HepG2 (cell line): ENCODE measurements at regions of chr11 and their contacts with region 1.

Region 1: GRCh38 chr11:43579171-43579918 is 101.2 kb upstream of the HSD17B12 start:
- DNase-seq: no peak
- ATAC-seq: peak; percentile 89
- H3K4me3 ChIP-seq: peak overlapping the region; percentile 63 to 73 (median 65)
- H3K27ac ChIP-seq: no peak overlapping the region
- H3K4me1 ChIP-seq: no peaks in the 10 kb centered on the region
- H3K27me3 ChIP-seq: peaks cover 14 to 92% of the 10 kb centered on the region in 2 experiments
- CTCF ChIP-seq: peak; percentile 61
- EP300 ChIP-seq: no peak
- POLR2A ChIP-seq: no peak
- RAD21 ChIP-seq: no peak

Region 2: DNA sequence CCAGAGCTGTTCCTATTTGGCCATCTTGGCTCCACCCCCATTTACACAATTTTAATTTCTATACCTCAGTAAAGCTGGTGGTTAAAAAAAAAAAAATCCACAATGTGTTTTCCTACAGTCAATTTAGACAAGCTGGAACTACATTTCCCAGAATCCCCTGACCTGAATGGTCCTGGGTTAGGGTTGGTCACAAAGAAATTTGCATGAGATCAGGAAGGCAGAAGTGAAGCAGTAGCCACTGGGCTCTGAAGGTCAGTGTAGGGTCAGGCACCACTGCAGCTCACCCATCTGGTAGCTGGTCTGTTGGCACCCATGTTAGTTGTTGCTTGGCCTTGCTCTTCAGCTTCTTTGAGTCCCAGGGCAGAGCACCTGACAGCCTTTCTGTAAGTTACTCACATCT is 478.2 kb before region 1 on chr11:
- CTCF ChIA-PET with region 1: no interaction called
- POLR2A ChIA-PET with region 1: no interaction called
- in situ Hi-C with region 1: no loop called
- intact Hi-C with region 1: no loop called
- DNase-seq: no peak
- ATAC-seq: no peak
- H3K4me3 ChIP-seq: no peak overlapping the region
- H3K27ac ChIP-seq: no peak overlapping the region
- H3K4me1 ChIP-seq: no peaks in the 10 kb centered on the region
- H3K27me3 ChIP-seq: no peaks in the 10 kb centered on the region
- CTCF ChIP-seq: no peak
- EP300 ChIP-seq: no peak
- POLR2A ChIP-seq: no peak
- RAD21 ChIP-seq: no peak

Region 3: GRCh38 chr11:43467958-43468357 is 111.4 kb before region 1 on chr11:
- CTCF ChIA-PET with region 1: no interaction called
- POLR2A ChIA-PET with region 1: no interaction called
- in situ Hi-C with region 1: no loop called
- intact Hi-C with region 1: no loop called
- DNase-seq: no peak
- ATAC-seq: no peak
- H3K4me3 ChIP-seq: no peak overlapping the region
- H3K27ac ChIP-seq: no peak overlapping the region
- H3K4me1 ChIP-seq: no peaks in the 10 kb centered on the region
- H3K27me3 ChIP-seq: no peaks in the 10 kb centered on the region
- CTCF ChIP-seq: no peak
- EP300 ChIP-seq: no peak
- POLR2A ChIP-seq: no peak
- RAD21 ChIP-seq: no peak

Region 4: GRCh38 chr11:43614214-43614613 is 34.9 kb after region 1 on chr11:
- CTCF ChIA-PET with region 1: no interaction called
- POLR2A ChIA-PET with region 1: no interaction called
- in situ Hi-C with region 1: no loop called
- intact Hi-C with region 1: no loop called
- DNase-seq: no peak
- ATAC-seq: no peak
- H3K4me3 ChIP-seq: no peak overlapping the region
- H3K27ac ChIP-seq: no peak overlapping the region
- H3K4me1 ChIP-seq: no peaks in the 10 kb centered on the region
- H3K27me3 ChIP-seq: 0 out of 5 replicates have a peak, but pooled peaks cover 2 to 4% of the 10 kb centered on the region in 2 experiments
- CTCF ChIP-seq: no peak
- EP300 ChIP-seq: no peak
- POLR2A ChIP-seq: no peak
- RAD21 ChIP-seq: no peak

Region 5: DNA sequence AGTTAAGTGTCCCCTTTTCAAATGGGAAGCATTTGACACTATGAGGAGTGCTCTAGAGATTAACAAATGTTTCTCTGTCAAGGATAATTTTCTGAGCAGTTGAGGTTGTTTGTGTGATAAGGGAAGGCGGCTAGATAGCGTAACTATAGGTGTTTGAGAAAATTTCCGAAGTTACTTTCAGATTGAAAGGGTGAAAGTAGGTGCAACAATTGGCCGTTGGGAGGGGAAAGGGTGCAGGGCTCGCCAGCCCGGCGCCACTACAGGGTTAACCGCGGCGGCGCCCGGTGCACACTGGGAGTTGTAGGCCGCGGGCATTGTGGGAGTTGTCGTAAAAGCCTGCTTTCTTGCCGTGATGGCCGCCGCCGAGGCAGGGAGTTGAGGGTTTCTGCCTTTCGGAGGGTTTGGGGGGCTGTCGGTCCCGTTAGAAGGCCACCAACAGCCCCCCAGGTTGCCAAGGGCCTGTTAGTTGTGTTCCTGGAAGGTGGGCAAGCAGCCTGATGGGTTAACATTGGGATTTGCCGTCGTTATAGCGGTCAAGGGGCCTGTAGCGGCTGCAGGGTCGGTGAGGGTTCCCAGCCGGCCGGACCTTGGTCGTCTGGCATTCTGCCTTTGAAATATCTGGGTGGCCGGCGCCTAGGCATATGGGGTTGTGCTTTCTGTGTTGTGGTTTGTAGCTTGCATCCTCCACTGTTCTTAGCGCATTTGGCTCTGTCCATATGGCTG is 64.7 kb after region 1 on chr11:
- CTCF ChIA-PET with region 1: no interaction called
- POLR2A ChIA-PET with region 1: no interaction called
- in situ Hi-C with region 1: loop called (anchors 10 kb)
- intact Hi-C with region 1: no loop called
- DNase-seq: peak; percentile 77
- ATAC-seq: peak; percentile 99
- H3K4me3 ChIP-seq: peak overlapping the region; percentile 77 to 92 (median 91)
- H3K27ac ChIP-seq: peak overlapping the region; percentile 86
- H3K4me1 ChIP-seq: peaks cover 26% of the 10 kb centered on the region
- H3K27me3 ChIP-seq: peaks cover 0 to 8% of the 10 kb centered on the region in 2 experiments; a peak in 1 of 5 replicates
- CTCF ChIP-seq: 0 out of 2 replicates have a peak, but pooled peaks have one; percentile 2
- EP300 ChIP-seq: peak in 1 of 2 experiments; percentile 25; a peak in 1 of 4 replicates
- POLR2A ChIP-seq: peak; percentile 81 to 86
- RAD21 ChIP-seq: 0 out of 2 replicates have a peak, but pooled peaks have one; percentile 25

Region 6: GRCh38 chr11:43680521-43681400 is 101.4 kb after region 1 on chr11 and contains the start of gene HSD17B12:
- CTCF ChIA-PET with region 1: no interaction called
- POLR2A ChIA-PET with region 1: no interaction called
- in situ Hi-C with region 1: no loop called
- intact Hi-C with region 1: loop called (anchors 5 kb)
- DNase-seq: peak; percentile 98
- ATAC-seq: peak; percentile 99
- H3K4me3 ChIP-seq: peak within 1 kb of the TSS; percentile 80 to 95 (median 91)
- H3K27ac ChIP-seq: peak within 1 kb of the TSS; percentile 89
- H3K4me1 ChIP-seq: peaks cover 39% of the 10 kb centered on the region
- H3K27me3 ChIP-seq: no peaks in the 10 kb centered on the region; a peak in 1 of 5 replicates
- CTCF ChIP-seq: peak; percentile 35
- EP300 ChIP-seq: no peak; a peak in 1 of 4 replicates
- POLR2A ChIP-seq: peak; percentile 91 to 94
- RAD21 ChIP-seq: 0 out of 2 replicates have a peak, but pooled peaks have one; percentile 36
- total RNA-seq, gene HSD17B12: 76.8 and 117 TPM in 2 replicates

Region 7: GRCh38 chr11:43708776-43709175 is 129.4 kb after region 1 on chr11:
- CTCF ChIA-PET with region 1: no interaction called
- POLR2A ChIA-PET with region 1: no interaction called
- in situ Hi-C with region 1: no loop called
- intact Hi-C with region 1: loop called (anchors 2 kb)
- DNase-seq: no peak
- ATAC-seq: no peak
- H3K4me3 ChIP-seq: no peak overlapping the region
- H3K27ac ChIP-seq: no peak overlapping the region
- H3K4me1 ChIP-seq: no peaks in the 10 kb centered on the region
- H3K27me3 ChIP-seq: no peaks in the 10 kb centered on the region
- CTCF ChIP-seq: no peak
- EP300 ChIP-seq: no peak
- POLR2A ChIP-seq: no peak
- RAD21 ChIP-seq: no peak

Region 8: GRCh38 chr11:43852057-43852636 is 272.8 kb after region 1 on chr11:
- CTCF ChIA-PET with region 1: no interaction called
- POLR2A ChIA-PET with region 1: no interaction called
- in situ Hi-C with region 1: no loop called
- intact Hi-C with region 1: loop called (anchors 5 kb)
- DNase-seq: peak; percentile 48
- ATAC-seq: peak; percentile 89
- H3K4me3 ChIP-seq: no peak overlapping the region
- H3K27ac ChIP-seq: no peak overlapping the region
- H3K4me1 ChIP-seq: no peaks in the 10 kb centered on the region
- H3K27me3 ChIP-seq: no peaks in the 10 kb centered on the region
- CTCF ChIP-seq: peak; percentile 69
- EP300 ChIP-seq: no peak
- POLR2A ChIP-seq: no peak
- RAD21 ChIP-seq: no peak